Cardiac septum (tissue), 1 donor: ENCODE measurements at regions of chr19 and their contacts with region 1.

Region 1: DNA sequence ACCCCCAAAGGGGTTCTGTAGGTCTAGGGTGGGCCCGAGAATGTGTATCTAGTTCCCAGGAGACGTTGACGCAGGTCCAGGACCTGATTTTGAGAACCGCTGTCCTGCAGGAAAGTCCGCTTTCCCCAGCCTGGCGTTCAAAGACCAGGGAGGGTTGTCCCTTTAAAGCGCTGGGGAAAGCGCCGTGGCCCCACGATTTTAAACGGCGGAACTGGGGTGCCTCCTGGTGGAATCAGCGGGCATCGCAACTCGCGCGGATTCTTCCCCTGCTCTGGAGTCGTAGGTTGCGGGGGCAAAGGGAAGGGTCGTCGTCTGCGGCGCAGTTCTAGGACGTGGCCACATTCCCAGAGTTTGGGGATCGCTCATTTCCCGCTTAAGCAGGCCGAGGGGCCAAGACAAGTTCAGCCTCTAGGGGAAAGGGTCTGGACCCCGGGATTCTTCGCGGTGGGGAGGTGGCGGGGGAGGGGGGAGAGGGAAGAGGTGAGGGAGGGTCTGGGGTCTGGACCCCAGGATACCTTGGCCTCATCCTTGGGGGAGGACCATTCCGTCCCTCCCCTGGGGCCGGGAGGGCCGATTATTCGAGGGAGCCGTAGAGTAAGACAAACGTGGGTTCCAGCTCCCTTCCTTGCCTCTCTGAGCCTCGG is 7.7 kb downstream of the PNMA8B start:
- DNase-seq: peak; percentile 85

Region 2: DNA sequence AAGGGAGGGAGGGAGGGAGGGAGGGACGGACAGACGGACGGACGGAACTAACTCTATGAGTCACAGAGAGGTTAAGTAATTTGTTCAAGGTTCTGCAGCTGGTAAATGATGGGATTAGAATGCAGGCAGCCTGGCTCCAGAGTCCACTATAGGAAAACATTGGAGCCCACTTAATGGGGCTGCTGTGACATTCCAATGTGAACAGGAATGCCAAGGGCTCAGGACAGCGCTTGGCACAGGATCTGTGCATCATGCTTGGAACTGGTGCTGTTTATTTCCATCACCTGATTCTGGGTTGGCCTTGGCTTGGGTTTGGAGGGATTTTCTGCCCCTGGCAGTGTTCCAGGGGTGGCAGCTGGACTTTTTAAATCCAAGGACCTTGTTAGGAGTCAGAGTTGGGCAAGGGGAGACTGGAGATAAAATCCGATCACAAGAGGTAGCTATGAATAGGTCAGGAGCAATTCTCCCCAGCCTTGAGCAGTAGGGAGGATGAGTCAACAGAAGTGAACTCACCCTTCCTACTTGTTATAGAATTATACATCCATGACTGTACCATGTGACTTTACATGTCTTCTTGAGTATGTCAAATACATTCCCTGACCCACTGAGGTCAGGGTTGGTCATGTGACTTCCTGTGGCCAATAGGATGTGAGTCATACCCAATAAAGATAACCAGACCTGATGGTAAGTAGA is 198.9 kb before region 1 on chr19:
- intact Hi-C with region 1: loop called (anchors 10 kb)
- DNase-seq: no peak

Region 3: GRCh38 chr19:46392243-46392801 is 95.6 kb before region 1 on chr19:
- intact Hi-C with region 1: loop called (anchors 2 kb)
- DNase-seq: no peak

Region 4: DNA sequence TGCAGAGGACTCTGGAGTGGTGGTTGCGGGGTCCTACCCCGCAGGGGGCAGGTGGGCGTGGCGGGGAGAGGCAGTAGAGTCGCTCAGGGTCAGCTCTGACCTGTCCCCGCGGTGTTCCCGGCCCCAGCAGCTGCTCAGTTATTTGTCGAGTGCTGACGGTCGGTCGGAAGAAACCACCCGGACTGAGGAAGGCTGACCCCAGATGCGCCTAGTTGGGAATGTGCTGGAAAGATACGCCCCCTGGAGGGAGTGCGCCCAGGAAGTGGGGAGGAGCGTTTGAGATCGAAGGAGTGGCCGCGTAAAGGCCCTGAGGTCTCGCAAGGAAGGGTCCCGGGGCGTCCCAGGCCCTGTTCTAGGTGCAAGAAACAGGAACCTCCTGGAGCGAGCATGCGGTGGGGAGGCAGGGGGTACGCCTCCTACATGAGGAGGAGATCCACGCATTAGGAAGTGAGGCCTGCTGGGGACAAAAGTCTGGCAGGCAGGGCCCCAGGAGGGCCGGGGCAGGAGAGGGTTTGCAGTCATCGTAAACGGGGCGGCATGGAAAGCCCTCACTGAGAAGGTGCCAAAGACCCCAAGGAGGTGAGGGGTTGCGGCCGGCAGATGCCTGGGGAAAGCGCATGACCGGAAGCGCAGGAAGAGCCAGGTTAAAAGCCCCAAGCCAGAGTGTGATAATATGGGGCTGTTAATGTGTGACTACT is 83.7 kb before region 1 on chr19:
- intact Hi-C with region 1: loop called (anchors 1 kb)
- DNase-seq: peak; percentile 80